ENCODE measurements at regions of chr17 and their contacts with region 1.

Region 1: GRCh38 chr17:16438557-16439302 is 23.4 kb downstream of the TRPV2 start:
- DNase-seq: peak; percentile 98

Region 2: GRCh38 chr17:16255481-16255921 is 183.2 kb before region 1 on chr17:
- CTCF ChIA-PET with region 1: no interaction called
- POLR2A ChIA-PET with region 1: no interaction called
- DNase-seq: no peak

Region 3: GRCh38 chr17:16304830-16305229 is 133.9 kb before region 1 on chr17:
- CTCF ChIA-PET with region 1: no interaction called
- POLR2A ChIA-PET with region 1: interaction called, 12 read pairs
- DNase-seq: peak; percentile 39

Region 4: GRCh38 chr17:16380640-16381495 is 57.9 kb before region 1 on chr17 and contains the start of gene UBB:
- CTCF ChIA-PET with region 1: no interaction called
- POLR2A ChIA-PET with region 1: interaction called, 69 read pairs
- DNase-seq: peak; percentile 89

Region 5: DNA sequence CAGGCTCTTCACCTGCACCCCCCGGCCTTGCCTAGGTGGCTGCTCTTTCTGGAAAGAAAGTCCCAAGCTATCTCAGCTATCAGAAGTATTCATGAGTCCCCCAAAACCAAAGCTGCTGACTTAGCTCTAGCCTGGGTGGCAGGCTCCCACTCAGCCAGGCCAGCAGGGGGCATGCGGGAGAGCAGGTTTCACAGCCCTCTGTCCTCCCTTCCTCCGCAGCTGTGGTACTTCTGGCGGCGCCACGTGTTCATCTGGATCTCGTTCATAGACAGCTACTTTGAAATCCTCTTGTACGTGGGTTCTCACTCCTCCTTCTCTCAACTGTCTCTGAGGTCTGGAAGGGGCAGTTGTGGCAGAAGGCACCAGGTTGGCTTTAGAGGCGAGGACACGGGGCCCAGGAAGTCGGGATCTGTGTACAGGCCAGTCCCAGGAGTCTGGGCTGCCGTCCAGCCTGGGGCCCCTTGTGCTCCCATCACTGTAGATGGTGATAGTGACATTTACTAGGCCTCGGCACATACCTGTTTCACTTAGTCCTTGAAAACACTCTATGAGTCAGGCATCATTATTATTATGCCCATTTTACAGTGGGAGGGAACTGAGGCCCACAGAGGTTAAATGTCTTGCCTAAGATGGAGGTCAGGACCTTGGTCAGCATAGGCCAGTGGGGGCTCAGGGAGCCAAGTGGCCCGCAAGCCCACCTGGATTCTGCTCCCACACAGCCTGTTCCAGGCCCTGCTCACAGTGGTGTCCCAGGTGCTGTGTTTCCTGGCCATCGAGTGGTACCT is 10.4 kb before region 1 on chr17:
- CTCF ChIA-PET with region 1: interaction called, 25 read pairs
- POLR2A ChIA-PET with region 1: interaction called, 175 read pairs
- DNase-seq: peak; percentile 77

Region 6: GRCh38 chr17:16477255-16477654 is 38.5 kb after region 1 on chr17:
- CTCF ChIA-PET with region 1: no interaction called
- POLR2A ChIA-PET with region 1: interaction called, 16 read pairs
- DNase-seq: no peak

Region 7: GRCh38 chr17:16529906-16530305 is 91.2 kb after region 1 on chr17:
- CTCF ChIA-PET with region 1: no interaction called
- POLR2A ChIA-PET with region 1: interaction called, 25 read pairs
- DNase-seq: no peak

Region 8: GRCh38 chr17:16551878-16552636 is 113.3 kb after region 1 on chr17:
- CTCF ChIA-PET with region 1: no interaction called
- POLR2A ChIA-PET with region 1: no interaction called
- DNase-seq: no peak